CD8-positive, alpha-beta T cell (primary cell): ENCODE measurements at regions of chr4 and their contacts with region 1.

Region 1: GRCh38 chr4:82284858-82285805 is 88.7 kb downstream of the HNRNPD start:
- DNase-seq: peak; percentile 98 to 99 (median 99)
- ATAC-seq: peak; percentile 91
- H3K4me3 ChIP-seq: peak overlapping the region; percentile 57 to 63
- H3K4me3 Mint-ChIP-seq: peak overlapping the region; percentile 88
- H3K27ac ChIP-seq: peak overlapping the region; percentile 43 to 68
- H3K27ac Mint-ChIP-seq: peak overlapping the region; percentile 41
- H3K4me1 ChIP-seq: peaks cover 12% of the 10 kb centered on the region
- H3K4me1 Mint-ChIP-seq: peaks cover 15% of the 10 kb centered on the region
- H3K27me3 ChIP-seq: peaks cover 0 to 5% of the 10 kb centered on the region in 2 experiments
- H3K27me3 Mint-ChIP-seq: no peaks in the 10 kb centered on the region
- CTCF ChIP-seq: peak; percentile 97

Region 2: GRCh38 chr4:82217986-82218715 is 67.0 kb before region 1 on chr4:
- CTCF ChIA-PET with region 1: no interaction called
- POLR2A ChIA-PET with region 1: no interaction called
- intact Hi-C with region 1: loop called in 1 of 2 experiments (anchors 5 kb)
- DNase-seq: peak in 3 of 9 experiments; percentile 8 to 33 (median 18)
- ATAC-seq: no peak
- H3K4me3 ChIP-seq: no peak overlapping the region
- H3K4me3 Mint-ChIP-seq: no peak overlapping the region
- H3K27ac ChIP-seq: no peak overlapping the region
- H3K27ac Mint-ChIP-seq: no peak overlapping the region
- H3K4me1 ChIP-seq: peaks cover 13% of the 10 kb centered on the region
- H3K4me1 Mint-ChIP-seq: peaks cover 27% of the 10 kb centered on the region
- H3K27me3 ChIP-seq: no peaks in the 10 kb centered on the region
- H3K27me3 Mint-ChIP-seq: no peaks in the 10 kb centered on the region
- CTCF ChIP-seq: no peak

Region 3: GRCh38 chr4:82235346-82235745 is 49.8 kb before region 1 on chr4:
- CTCF ChIA-PET with region 1: no interaction called
- POLR2A ChIA-PET with region 1: no interaction called
- intact Hi-C with region 1: no loop called
- DNase-seq: no peak
- ATAC-seq: no peak
- H3K4me3 ChIP-seq: no peak overlapping the region
- H3K4me3 Mint-ChIP-seq: no peak overlapping the region
- H3K27ac ChIP-seq: no peak overlapping the region
- H3K27ac Mint-ChIP-seq: no peak overlapping the region
- H3K4me1 ChIP-seq: no peaks in the 10 kb centered on the region
- H3K4me1 Mint-ChIP-seq: no peaks in the 10 kb centered on the region
- H3K27me3 ChIP-seq: no peaks in the 10 kb centered on the region
- H3K27me3 Mint-ChIP-seq: peaks cover 11% of the 10 kb centered on the region
- CTCF ChIP-seq: no peak

Region 4: GRCh38 chr4:82360298-82361177 is 75.4 kb after region 1 on chr4:
- CTCF ChIA-PET with region 1: interaction called, 4 read pairs
- POLR2A ChIA-PET with region 1: no interaction called
- intact Hi-C with region 1: loop called (anchors 2 to 5 kb)
- DNase-seq: peak in 2 of 9 experiments; percentile 51 to 59
- ATAC-seq: peak; percentile 75
- H3K4me3 ChIP-seq: no peak overlapping the region
- H3K4me3 Mint-ChIP-seq: peak overlapping the region; percentile 1
- H3K27ac ChIP-seq: peak overlapping the region in 1 of 2 experiments; percentile 21
- H3K27ac Mint-ChIP-seq: peak overlapping the region; percentile 15
- H3K4me1 ChIP-seq: peaks cover 92% of the 10 kb centered on the region
- H3K4me1 Mint-ChIP-seq: peaks cover 91% of the 10 kb centered on the region
- H3K27me3 ChIP-seq: no peaks in the 10 kb centered on the region
- H3K27me3 Mint-ChIP-seq: no peaks in the 10 kb centered on the region
- CTCF ChIP-seq: peak; percentile 56

Region 5: GRCh38 chr4:82381661-82382296 is 96.6 kb after region 1 on chr4:
- CTCF ChIA-PET with region 1: no interaction called
- POLR2A ChIA-PET with region 1: no interaction called
- intact Hi-C with region 1: no loop called
- DNase-seq: no peak
- ATAC-seq: no peak
- H3K4me3 ChIP-seq: no peak overlapping the region
- H3K4me3 Mint-ChIP-seq: no peak overlapping the region
- H3K27ac ChIP-seq: no peak overlapping the region
- H3K27ac Mint-ChIP-seq: no peak overlapping the region
- H3K4me1 ChIP-seq: no peaks in the 10 kb centered on the region
- H3K4me1 Mint-ChIP-seq: peaks cover 9% of the 10 kb centered on the region
- H3K27me3 ChIP-seq: no peaks in the 10 kb centered on the region
- H3K27me3 Mint-ChIP-seq: peaks cover 9% of the 10 kb centered on the region
- CTCF ChIP-seq: no peak

Region 6: DNA sequence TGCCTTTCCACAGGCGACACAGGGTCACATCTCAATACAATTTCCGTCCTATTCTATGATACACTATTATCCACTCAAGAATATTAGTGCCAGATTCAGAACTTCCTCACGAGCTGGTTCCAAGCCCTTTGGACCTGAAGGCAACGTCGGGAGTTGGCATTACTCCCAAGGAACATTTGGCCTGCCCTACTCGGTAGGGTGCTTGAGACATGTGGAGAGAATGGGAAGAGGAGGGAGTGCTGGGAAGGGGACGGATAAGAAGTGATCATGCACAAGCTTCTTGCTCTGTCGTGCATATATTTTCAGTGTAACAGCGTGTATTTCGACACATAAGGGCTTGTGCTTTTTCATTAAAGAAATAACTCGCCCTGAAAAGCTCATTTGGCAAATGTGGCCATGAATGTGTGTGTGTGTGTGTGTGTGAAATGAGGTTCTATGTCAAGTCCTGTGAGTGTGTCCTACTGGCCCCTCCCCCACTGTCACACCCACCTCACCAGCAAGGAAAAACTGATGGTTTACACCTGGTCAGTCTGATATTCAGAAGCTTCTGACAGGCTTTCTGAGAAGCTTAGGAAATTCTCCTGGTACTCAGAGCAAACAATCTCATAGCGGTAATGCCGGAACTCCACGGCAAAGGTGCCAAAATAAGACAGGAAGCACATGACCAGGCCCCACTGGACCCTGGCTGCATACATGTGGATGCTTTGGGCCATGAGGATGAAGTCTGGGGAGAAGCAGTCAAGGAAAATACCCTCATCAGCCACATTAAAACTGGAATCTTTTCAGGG is 200.1 kb after region 1 on chr4:
- CTCF ChIA-PET with region 1: no interaction called
- POLR2A ChIA-PET with region 1: no interaction called
- intact Hi-C with region 1: no loop called
- DNase-seq: no peak
- ATAC-seq: no peak
- H3K4me3 ChIP-seq: no peak overlapping the region
- H3K4me3 Mint-ChIP-seq: no peak overlapping the region
- H3K27ac ChIP-seq: no peak overlapping the region
- H3K27ac Mint-ChIP-seq: no peak overlapping the region
- H3K4me1 ChIP-seq: no peaks in the 10 kb centered on the region
- H3K4me1 Mint-ChIP-seq: no peaks in the 10 kb centered on the region
- H3K27me3 ChIP-seq: no peaks in the 10 kb centered on the region
- H3K27me3 Mint-ChIP-seq: no peaks in the 10 kb centered on the region
- CTCF ChIP-seq: no peak

Region 7: DNA sequence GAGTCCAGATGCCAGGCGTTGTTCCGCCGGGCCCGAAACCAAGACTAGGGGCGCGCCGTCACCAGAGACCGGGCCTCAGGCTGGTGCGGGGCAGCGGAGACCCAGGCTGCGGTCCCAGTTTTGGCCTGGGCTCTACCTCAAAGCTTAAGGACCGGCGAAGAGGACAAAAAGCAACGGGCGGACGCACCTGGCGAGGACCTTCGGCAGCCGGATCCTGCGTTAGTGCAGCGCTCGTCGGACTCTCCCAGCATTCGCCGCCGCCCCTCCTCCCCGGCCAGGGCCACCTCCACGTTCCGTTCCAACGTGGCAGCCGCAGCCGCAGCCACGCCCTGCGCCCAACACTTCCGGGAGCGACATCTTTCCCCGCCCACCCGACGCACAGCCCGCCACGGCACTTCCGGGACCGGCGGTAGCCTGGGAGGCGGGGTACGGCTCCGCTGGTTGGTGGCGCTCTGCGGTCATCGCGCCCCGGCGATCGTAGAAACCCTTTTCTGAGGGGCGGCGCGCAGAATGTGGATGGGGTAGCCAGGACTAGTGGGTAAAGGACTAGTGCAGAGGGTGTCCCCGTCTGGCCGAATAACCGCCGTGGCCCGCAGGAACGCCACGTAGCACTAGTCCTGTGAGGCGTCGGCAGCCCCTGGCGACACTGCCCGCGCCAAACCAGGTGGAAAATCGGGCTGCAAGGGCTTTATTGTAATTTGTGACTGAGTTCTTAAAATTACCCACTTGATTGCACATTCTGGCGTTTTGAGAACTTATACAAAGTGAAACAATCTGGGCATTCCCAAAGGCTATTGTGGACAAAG is 606.0 kb after region 1 on chr4 and contains the start of gene SEC31A:
- CTCF ChIA-PET with region 1: no interaction called
- POLR2A ChIA-PET with region 1: no interaction called
- intact Hi-C with region 1: loop called in 1 of 2 experiments (anchors 10 kb)
- DNase-seq: peak; percentile 93 to 99 (median 97)
- ATAC-seq: peak; percentile 93
- H3K4me3 ChIP-seq: peak within 1 kb of the TSS; percentile 87 to 88
- H3K4me3 Mint-ChIP-seq: peak within 1 kb of the TSS; percentile 89
- H3K27ac ChIP-seq: peak within 1 kb of the TSS; percentile 96
- H3K27ac Mint-ChIP-seq: peak within 1 kb of the TSS; percentile 98
- H3K4me1 ChIP-seq: peaks cover 22% of the 10 kb centered on the region
- H3K4me1 Mint-ChIP-seq: peaks cover 45% of the 10 kb centered on the region
- H3K27me3 ChIP-seq: no peaks in the 10 kb centered on the region
- H3K27me3 Mint-ChIP-seq: no peaks in the 10 kb centered on the region
- CTCF ChIP-seq: no peak
- total RNA-seq, gene SEC31A: 115 to 117 TPM

Region 8: DNA sequence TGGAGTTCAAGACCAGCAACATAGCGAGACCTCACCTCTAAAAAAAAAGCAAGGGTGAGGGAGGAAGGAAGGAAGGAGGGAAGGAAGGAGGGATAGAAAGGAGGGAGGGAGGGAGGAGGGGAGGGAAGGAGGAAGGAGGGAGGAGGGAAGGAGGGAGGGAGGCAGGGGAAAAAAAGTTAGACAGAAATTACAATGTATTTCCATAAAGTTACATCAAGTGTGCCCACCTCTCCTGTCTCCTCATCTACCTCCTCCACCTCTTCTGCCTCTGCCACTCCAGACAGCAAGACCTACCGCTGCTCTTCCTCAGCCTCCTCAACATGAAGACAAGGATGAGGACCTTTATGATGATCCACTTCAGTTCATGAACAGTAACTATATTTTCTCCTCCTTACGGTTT is 717.2 kb after region 1 on chr4:
- CTCF ChIA-PET with region 1: no interaction called
- POLR2A ChIA-PET with region 1: no interaction called
- intact Hi-C with region 1: no loop called
- DNase-seq: no peak
- ATAC-seq: no peak
- H3K4me3 ChIP-seq: no peak overlapping the region
- H3K4me3 Mint-ChIP-seq: no peak overlapping the region
- H3K27ac ChIP-seq: no peak overlapping the region
- H3K27ac Mint-ChIP-seq: no peak overlapping the region
- H3K4me1 ChIP-seq: no peaks in the 10 kb centered on the region
- H3K4me1 Mint-ChIP-seq: peaks cover 27% of the 10 kb centered on the region
- H3K27me3 ChIP-seq: no peaks in the 10 kb centered on the region
- H3K27me3 Mint-ChIP-seq: no peaks in the 10 kb centered on the region
- CTCF ChIP-seq: no peak

Region 9: DNA sequence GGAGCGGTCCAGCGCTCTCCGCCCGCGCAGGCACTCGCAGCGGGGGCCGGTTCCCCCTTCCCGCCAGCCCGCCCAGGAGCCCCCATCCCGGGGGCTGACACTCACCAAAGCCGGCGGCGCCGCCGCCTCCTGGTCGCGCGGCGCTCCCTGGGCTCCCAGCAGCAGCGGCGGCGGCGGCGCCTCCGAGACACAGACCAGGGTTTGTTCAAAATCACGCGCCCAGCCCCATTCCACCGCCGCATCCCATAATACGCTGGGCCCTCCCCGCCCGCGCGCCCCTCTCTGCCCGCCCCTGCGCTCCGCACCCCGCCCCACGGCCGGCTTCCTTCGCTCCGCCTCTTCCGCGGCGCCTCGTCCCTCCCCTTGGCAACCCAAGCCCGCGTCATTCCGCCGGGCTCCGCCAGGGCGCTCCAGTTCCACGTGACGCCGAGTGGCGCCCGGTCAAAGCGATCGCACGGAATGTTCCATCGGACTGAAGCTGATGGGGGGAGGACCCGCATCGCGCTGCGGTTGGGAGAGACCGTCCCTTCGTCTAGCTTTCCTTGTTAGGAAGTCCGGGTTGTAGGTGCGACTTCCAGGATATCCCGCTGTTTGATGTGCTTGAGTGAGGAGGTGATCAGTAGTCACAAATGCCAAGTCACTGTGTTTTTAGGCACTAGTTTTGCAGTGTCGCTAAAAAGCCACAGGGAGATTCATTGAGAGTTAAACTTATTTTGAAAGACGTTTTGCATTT is 727.7 kb after region 1 on chr4:
- CTCF ChIA-PET with region 1: no interaction called
- POLR2A ChIA-PET with region 1: no interaction called
- intact Hi-C with region 1: loop called in 1 of 2 experiments (anchors 5 kb)
- DNase-seq: peak; percentile 94 to 98 (median 96)
- ATAC-seq: peak; percentile 88
- H3K4me3 ChIP-seq: peak overlapping the region; percentile 54 to 69
- H3K4me3 Mint-ChIP-seq: peak overlapping the region; percentile 90
- H3K27ac ChIP-seq: peak overlapping the region; percentile 56 to 95
- H3K27ac Mint-ChIP-seq: peak overlapping the region; percentile 91
- H3K4me1 ChIP-seq: peaks cover 31% of the 10 kb centered on the region
- H3K4me1 Mint-ChIP-seq: peaks cover 40% of the 10 kb centered on the region
- H3K27me3 ChIP-seq: no peaks in the 10 kb centered on the region
- H3K27me3 Mint-ChIP-seq: no peaks in the 10 kb centered on the region
- CTCF ChIP-seq: peak; percentile 65

Region 10: GRCh38 chr4:83484500-83485461 is 1199.6 kb after region 1 on chr4 and contains the start of gene ABRAXAS1:
- CTCF ChIA-PET with region 1: no interaction called
- POLR2A ChIA-PET with region 1: no interaction called
- intact Hi-C with region 1: loop called in 1 of 2 experiments (anchors 5 kb)
- DNase-seq: peak; percentile 89 to 97 (median 94)
- ATAC-seq: peak; percentile 95
- H3K4me3 ChIP-seq: peak within 1 kb of the TSS; percentile 77 to 81
- H3K4me3 Mint-ChIP-seq: peak within 1 kb of the TSS; percentile 96
- H3K27ac ChIP-seq: peak within 1 kb of the TSS; percentile 71 to 72
- H3K27ac Mint-ChIP-seq: peak within 1 kb of the TSS; percentile 96
- H3K4me1 ChIP-seq: peaks cover 10% of the 10 kb centered on the region
- H3K4me1 Mint-ChIP-seq: peaks cover 35% of the 10 kb centered on the region
- H3K27me3 ChIP-seq: no peaks in the 10 kb centered on the region
- H3K27me3 Mint-ChIP-seq: no peaks in the 10 kb centered on the region
- CTCF ChIP-seq: no peak
- total RNA-seq, gene ABRAXAS1: 13.9 to 17.2 TPM